ENCODE measurements at regions of chr17 and their contacts with region 1.

Region 1: DNA sequence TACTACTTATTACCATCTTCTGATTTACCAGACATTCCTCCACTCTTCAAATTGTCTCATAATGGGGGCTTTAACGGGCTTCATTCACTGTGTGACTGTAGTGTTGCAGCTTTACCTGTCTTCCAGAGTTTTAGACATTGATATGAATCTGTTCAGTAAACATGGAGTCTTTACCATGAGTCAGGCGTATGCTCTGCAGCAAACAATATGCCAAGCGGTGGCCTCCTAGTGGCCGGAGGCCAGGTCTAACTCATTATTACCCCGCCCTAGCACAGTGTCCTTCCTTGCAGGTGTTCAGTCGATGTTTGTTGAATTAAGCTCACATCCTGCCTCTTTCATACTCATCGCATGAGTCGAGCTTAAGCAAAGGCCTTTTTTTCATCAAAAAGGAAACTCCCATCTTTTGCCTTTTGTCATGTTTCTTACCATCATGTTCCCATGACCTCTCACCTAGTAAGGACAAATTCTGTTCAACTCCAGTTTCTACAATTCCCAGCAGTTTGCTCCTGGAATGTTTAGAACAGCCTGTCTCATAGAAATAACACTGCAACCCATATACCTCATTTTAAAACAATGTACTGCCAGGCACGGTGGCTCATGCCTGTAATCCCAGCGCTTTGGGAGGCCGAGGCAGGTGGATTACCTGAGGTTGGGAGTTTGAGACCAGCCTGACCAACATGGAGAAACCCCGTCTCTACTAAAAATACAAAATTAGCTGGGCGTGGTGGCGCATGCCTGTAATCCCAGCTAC is 39.4 kb downstream of the TUBD1 start:
- DNase-seq: peak in 4 of 9 donors; percentile 29 to 43 (median 34)
- ATAC-seq: peak; percentile 83
- H3K4me3 ChIP-seq: no peak overlapping the region
- H3K4me3 Mint-ChIP-seq: peak overlapping the region in 8 of 10 donors; percentile 3 to 41 (median 28)
- H3K27ac ChIP-seq: no peak overlapping the region
- H3K27ac Mint-ChIP-seq: peak overlapping the region in 8 of 9 donors; percentile 1 to 93 (median 76)
- H3K4me1 ChIP-seq: peaks cover 5 to 24% of the 10 kb centered on the region in 2 donors
- H3K4me1 Mint-ChIP-seq: peaks cover 25 to 51% (median 31%) of the 10 kb centered on the region in 7 donors
- H3K27me3 ChIP-seq: no peaks in the 10 kb centered on the region
- H3K27me3 Mint-ChIP-seq: no peaks in the 10 kb centered on the region

Region 2: DNA sequence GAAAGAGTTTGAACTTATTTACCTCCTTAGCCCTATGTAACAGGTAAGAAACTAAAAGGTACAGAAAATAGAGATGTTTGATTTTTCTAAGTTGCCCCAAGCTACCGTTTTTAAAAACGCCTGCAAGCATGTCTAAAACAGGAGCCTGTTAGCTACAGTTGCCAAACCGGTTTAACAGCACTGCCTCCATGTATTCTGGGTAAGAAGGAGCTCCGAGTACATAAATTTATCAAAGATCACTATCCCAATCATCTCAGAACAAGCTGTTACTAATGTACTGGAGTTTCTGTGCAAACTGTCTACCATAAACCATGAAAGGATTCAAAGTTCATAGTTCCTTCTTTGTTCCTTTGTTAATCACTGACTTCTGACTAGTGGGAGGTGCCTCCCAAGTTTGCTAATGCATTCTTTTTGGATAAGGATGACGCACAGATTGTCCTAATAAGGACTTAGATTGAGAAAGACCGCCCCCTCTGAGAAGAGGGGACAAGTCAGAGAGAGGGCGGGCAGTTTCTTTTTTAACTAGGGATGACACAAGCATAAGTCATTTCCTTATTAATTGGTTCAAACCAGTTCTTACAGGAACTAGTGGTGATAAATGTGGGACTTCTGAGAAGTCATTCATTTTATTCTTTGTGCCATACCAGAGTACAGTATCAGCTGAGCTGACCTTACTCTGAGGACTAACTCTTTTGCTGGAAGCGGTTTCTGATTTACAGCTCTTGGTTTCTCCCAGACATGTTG is 15.9 kb before region 1 on chr17:
- CTCF ChIA-PET with region 1: interaction called, 3 read pairs
- POLR2A ChIA-PET with region 1: interaction called, 13 read pairs
- intact Hi-C with region 1: loop called in 1 of 2 experiments (anchors 2 kb)
- DNase-seq: peak in 8 of 9 donors; percentile 51 to 91 (median 74)
- ATAC-seq: peak; percentile 94
- H3K4me3 ChIP-seq: peak overlapping the region; percentile 72
- H3K4me3 Mint-ChIP-seq: peak overlapping the region; percentile 83 to 100 (median 95)
- H3K27ac ChIP-seq: peak overlapping the region; percentile 88
- H3K27ac Mint-ChIP-seq: peak overlapping the region; percentile 90 to 99 (median 96)
- H3K4me1 ChIP-seq: peaks cover 6 to 14% of the 10 kb centered on the region in 2 donors
- H3K4me1 Mint-ChIP-seq: peaks cover 14 to 69% (median 49%) of the 10 kb centered on the region in 7 donors
- H3K27me3 ChIP-seq: no peaks in the 10 kb centered on the region
- H3K27me3 Mint-ChIP-seq: peaks cover 0 to 17% (median 0%) of the 10 kb centered on the region in 5 donors